ENCODE measurements at regions of chr2 and their contacts with region 1.

Region 1: GRCh38 chr2:136384531-136385303 is 266.8 kb upstream of the CXCR4 start:
- DNase-seq: no peak
- H3K4me3 ChIP-seq: no peak overlapping the region
- H3K27ac ChIP-seq: peak overlapping the region in 1 of 4 donors; percentile 48
- H3K4me1 ChIP-seq: peaks cover 0 to 14% (median 12%) of the 10 kb centered on the region in 4 donors
- H3K27me3 ChIP-seq: no peaks in the 10 kb centered on the region
- CTCF ChIP-seq: peak in 3 of 4 experiments; percentile 27 to 52 (median 28)
- EP300 ChIP-seq: peak in 1 of 4 donors; percentile 39
- POLR2A ChIP-seq: no peak

Region 2: DNA sequence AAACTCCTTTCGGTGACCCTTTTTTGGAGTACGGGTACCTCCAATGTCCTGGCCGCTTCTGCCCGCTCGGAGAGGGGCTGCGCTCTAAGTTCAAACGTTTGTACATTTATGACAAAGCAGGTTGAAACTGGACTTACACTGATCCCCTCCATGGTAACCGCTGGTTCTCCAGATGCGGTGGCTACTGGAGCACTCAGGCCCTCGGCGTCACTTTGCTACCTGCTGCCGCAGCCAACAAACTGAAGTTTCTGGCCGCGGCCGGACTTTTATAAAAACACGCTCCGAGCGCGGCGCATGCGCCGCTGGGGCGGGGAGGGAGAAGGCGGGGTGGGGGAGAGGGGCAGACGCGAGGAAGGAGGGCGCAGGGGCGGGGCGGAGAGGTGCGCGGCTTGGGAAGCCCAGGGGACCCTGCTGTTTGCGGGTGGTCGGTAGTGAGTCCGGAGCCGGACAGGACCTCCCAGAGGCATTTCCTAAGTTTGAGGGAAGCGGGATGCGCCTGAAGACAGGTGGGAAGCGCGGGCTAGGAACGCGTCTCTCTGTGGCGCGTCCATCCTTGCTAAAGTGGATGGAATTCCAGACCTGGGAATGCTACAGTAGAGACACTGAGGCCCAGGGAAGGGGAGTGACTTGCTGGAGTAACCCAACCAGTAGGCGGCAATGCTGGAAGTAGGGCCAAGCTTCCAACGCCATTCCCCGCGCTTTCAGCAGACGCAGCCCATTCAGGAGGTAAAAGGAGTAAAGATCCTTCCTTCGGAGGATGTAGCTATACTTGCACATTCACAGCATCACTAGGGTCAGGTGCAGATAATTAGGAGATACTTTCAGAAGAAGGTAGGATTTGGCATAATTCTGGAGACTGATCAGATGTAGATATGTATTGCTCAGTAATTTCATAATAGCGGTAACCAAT is 266.6 kb before region 1 on chr2 and contains the start of gene CXCR4:
- intact Hi-C with region 1: loop called (anchors 10 kb)
- DNase-seq: peak; percentile 77
- H3K4me3 ChIP-seq: peak within 1 kb of the TSS; percentile 20 to 53 (median 42)
- H3K27ac ChIP-seq: peak within 1 kb of the TSS in 2 of 4 donors; percentile 60 to 67
- H3K4me1 ChIP-seq: peaks cover 0 to 39% (median 35%) of the 10 kb centered on the region in 4 donors
- H3K27me3 ChIP-seq: peaks cover 19 to 84% (median 53%) of the 10 kb centered on the region in 3 donors
- CTCF ChIP-seq: no peak
- EP300 ChIP-seq: no peak
- POLR2A ChIP-seq: no peak
- total RNA-seq, gene CXCR4: 5.0 to 13.6 (median 6.3) TPM

Region 3: DNA sequence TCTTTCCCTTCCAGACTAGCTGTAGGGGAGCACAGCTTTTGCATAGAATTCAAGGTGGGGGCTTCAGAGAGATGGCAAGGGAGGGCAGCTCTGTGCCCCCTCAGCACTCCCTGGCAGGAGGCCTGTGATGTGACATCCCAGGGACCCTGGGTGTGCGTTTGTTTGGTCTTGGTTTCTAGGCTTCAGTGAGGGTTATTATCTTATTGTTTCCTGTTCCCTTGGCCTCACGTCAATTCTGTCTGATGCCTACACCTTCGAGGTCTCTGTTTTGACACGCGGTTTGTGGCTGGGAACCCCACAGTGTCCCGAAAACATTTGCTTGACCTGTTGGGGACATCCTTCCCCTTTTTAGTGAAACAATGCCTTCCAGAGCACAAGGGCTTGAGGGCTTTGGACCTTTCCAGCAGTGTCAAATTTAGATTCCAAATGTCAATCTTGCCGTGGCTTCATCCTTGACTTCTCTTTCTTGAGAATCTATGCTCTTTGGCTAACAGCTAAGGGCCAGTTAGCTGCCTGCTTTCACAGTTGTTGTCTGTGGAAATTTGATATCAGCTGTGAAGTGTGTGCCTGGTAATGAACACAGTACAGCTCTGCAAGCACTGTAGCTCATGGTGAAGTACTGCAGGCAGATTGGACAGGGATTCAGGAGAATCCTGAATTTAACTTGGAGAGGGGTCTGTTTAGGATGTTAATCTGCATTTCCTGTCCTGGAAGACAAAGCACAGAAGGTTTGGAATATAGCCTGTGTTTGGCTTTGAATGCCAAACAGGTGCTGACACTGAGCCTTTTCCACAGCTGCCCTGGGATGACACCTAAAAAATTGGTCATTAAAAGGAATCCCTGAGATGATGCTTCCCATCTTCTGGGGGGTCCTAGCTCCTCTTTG is 158.5 kb before region 1 on chr2:
- intact Hi-C with region 1: no loop called
- DNase-seq: no peak
- H3K4me3 ChIP-seq: no peak overlapping the region
- H3K27ac ChIP-seq: no peak overlapping the region
- H3K4me1 ChIP-seq: no peaks in the 10 kb centered on the region
- H3K27me3 ChIP-seq: no peaks in the 10 kb centered on the region
- CTCF ChIP-seq: no peak
- EP300 ChIP-seq: no peak
- POLR2A ChIP-seq: no peak